Natural killer cell (primary cell): ENCODE measurements at regions of chr2 and their contacts with region 1.

Region 1: GRCh38 chr2:217166241-217166850 is 306.5 kb upstream of the TNP1 start:
- DNase-seq: no peak
- ATAC-seq: no peak
- H3K4me3 ChIP-seq: no peak overlapping the region
- H3K4me3 Mint-ChIP-seq: no peak overlapping the region
- H3K27ac ChIP-seq: no peak overlapping the region
- H3K27ac Mint-ChIP-seq: no peak overlapping the region
- H3K4me1 ChIP-seq: peaks cover 5% of the 10 kb centered on the region
- H3K4me1 Mint-ChIP-seq: peaks cover 17 to 18% of the 10 kb centered on the region in 2 donors
- H3K27me3 ChIP-seq: no peaks in the 10 kb centered on the region
- H3K27me3 Mint-ChIP-seq: peaks cover 12 to 28% of the 10 kb centered on the region in 2 donors
- CTCF ChIP-seq: no peak

Region 2: DNA sequence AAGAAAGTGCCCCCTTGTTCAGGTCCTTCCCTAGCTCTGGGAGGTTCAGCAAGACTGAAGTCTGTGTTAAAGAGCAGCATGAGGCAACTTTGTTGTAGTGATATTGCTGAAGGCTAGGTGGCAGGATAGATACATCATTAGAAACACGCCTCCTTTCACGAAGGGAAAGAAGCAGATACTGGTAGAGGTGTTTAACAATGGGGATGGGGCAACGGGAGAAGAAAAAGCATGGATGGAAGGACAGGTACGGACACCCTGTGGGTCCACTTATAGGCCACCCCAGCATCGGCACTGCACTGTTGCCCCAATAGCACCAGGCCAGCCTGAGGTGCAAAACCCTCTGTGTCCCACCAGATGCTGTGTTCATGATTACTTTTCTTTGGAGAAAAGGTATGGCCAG is 467.5 kb before region 1 on chr2:
- intact Hi-C with region 1: loop called (anchors 1 kb)
- DNase-seq: peak in 1 of 2 donors; percentile 58
- ATAC-seq: peak; percentile 43 to 80 (median 44)
- H3K4me3 ChIP-seq: no peak overlapping the region
- H3K4me3 Mint-ChIP-seq: no peak overlapping the region
- H3K27ac ChIP-seq: no peak overlapping the region
- H3K27ac Mint-ChIP-seq: no peak overlapping the region
- H3K4me1 ChIP-seq: peaks cover 9% of the 10 kb centered on the region
- H3K4me1 Mint-ChIP-seq: peaks cover 5 to 11% of the 10 kb centered on the region in 2 donors
- H3K27me3 ChIP-seq: peaks cover 25% of the 10 kb centered on the region
- H3K27me3 Mint-ChIP-seq: peaks cover 10 to 40% of the 10 kb centered on the region in 2 donors
- CTCF ChIP-seq: peak; percentile 51

Region 3: GRCh38 chr2:217064234-217065024 is 101.9 kb before region 1 on chr2:
- intact Hi-C with region 1: no loop called
- DNase-seq: no peak
- ATAC-seq: no peak
- H3K4me3 ChIP-seq: no peak overlapping the region
- H3K4me3 Mint-ChIP-seq: no peak overlapping the region
- H3K27ac ChIP-seq: no peak overlapping the region
- H3K27ac Mint-ChIP-seq: no peak overlapping the region
- H3K4me1 ChIP-seq: no peaks in the 10 kb centered on the region
- H3K4me1 Mint-ChIP-seq: no peaks in the 10 kb centered on the region
- H3K27me3 ChIP-seq: no peaks in the 10 kb centered on the region
- H3K27me3 Mint-ChIP-seq: peaks cover 9 to 10% of the 10 kb centered on the region in 2 donors
- CTCF ChIP-seq: no peak